Panc1 (cell line): ENCODE measurements at regions of chrX and their contacts with region 1.

Region 1: GRCh38 chrX:12984629-12985319 is 9.9 kb downstream of the TMSB4X start:
- DNase-seq: no peak
- ATAC-seq: peak; percentile 41
- H3K4me3 ChIP-seq: no peak overlapping the region
- H3K27ac ChIP-seq: peak overlapping the region; percentile 91
- H3K4me1 ChIP-seq: peaks cover 13% of the 10 kb centered on the region
- H3K27me3 ChIP-seq: no peaks in the 10 kb centered on the region
- CTCF ChIP-seq: no peak

Region 2: DNA sequence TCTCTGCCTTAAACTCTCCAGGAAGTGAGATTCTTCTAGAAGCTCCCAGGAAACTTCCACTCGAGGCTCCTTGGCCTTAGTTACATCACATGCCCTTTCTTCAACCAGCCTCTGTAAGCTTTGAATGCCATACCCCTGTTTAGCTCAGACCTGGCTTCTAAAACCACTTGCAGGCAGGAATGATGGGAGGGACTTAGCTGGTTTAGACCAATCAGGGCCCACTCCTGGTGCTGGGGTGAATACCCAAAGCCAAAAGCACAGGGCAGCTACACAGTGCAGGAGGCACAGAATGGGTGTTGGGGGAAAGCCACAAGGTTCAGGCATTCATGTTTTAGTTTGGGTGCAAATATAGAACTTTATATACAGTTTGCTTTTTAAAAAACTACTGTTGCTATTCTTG is 550.3 kb before region 1 on chrX:
- CTCF ChIA-PET with region 1: no interaction called
- POLR2A ChIA-PET with region 1: no interaction called
- in situ Hi-C with region 1: no loop called
- intact Hi-C with region 1: no loop called
- DNase-seq: no peak
- ATAC-seq: no peak
- H3K4me3 ChIP-seq: no peak overlapping the region
- H3K27ac ChIP-seq: no peak overlapping the region
- H3K4me1 ChIP-seq: no peaks in the 10 kb centered on the region
- H3K27me3 ChIP-seq: no peaks in the 10 kb centered on the region
- CTCF ChIP-seq: no peak

Region 3: DNA sequence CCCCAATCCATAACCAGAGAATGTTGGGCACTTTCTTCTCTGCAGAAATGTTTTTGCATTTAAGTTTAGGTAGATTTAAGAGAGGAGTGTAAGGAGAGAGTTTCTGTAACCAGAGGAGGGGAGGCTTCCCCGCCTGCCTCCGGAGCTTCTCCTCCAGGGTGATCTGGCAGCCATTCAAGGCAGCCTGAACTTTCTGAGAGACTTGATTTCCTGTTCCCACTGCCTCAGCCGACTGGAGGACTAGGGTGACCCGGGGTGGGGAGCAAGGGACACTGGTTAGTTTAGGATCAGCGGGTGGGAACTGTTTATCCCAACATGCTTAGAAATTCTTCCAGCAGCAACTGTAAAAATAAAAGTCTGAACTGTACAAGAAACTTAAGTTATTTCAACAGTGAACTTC is 44.6 kb after region 1 on chrX:
- CTCF ChIA-PET with region 1: no interaction called
- POLR2A ChIA-PET with region 1: no interaction called
- in situ Hi-C with region 1: no loop called
- intact Hi-C with region 1: loop called (anchors 5 kb)
- DNase-seq: no peak
- ATAC-seq: peak; percentile 85
- H3K4me3 ChIP-seq: no peak overlapping the region
- H3K27ac ChIP-seq: peak overlapping the region; percentile 92
- H3K4me1 ChIP-seq: peaks cover 7% of the 10 kb centered on the region; the same call in 1 of the 2 replicates
- H3K27me3 ChIP-seq: no peaks in the 10 kb centered on the region
- CTCF ChIP-seq: no peak

Region 4: GRCh38 chrX:13092455-13092941 is 107.7 kb after region 1 on chrX:
- CTCF ChIA-PET with region 1: no interaction called
- POLR2A ChIA-PET with region 1: no interaction called
- in situ Hi-C with region 1: no loop called
- intact Hi-C with region 1: loop called (anchors 10 kb)
- DNase-seq: no peak
- ATAC-seq: no peak
- H3K4me3 ChIP-seq: no peak overlapping the region
- H3K27ac ChIP-seq: peak overlapping the region; percentile 81; the same call in 1 of the 2 replicates
- H3K4me1 ChIP-seq: peaks cover 10% of the 10 kb centered on the region
- H3K27me3 ChIP-seq: no peaks in the 10 kb centered on the region
- CTCF ChIP-seq: no peak